CD4-positive, alpha-beta T cell (primary cell): ENCODE measurements at regions of chr9 and their contacts with region 1.

Region 1: DNA sequence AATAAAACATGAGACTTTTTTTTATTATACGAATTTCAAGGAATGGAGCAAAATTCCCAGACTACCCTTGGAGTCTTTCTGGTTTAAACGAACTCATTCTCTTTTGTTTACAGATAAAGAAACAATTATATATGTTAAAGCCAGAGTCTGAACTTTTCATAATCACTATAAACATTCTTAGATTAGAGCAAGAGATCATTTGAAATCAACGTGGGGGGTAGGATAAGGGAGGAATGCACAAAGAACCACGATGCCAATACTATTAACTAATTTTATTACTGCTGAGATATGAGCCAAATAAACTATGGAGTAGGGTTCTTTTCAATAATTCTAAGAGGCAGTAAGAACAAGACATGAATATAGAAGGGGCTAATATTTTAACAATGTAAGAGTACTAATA is 148.0 kb upstream of the FREM1 start:
- DNase-seq: no peak
- ATAC-seq: no peak
- H3K4me3 ChIP-seq: no peak overlapping the region
- H3K4me3 Mint-ChIP-seq: no peak overlapping the region
- H3K27ac ChIP-seq: no peak overlapping the region
- H3K27ac Mint-ChIP-seq: no peak overlapping the region
- H3K4me1 ChIP-seq: no peaks in the 10 kb centered on the region
- H3K4me1 Mint-ChIP-seq: no peaks in the 10 kb centered on the region
- H3K27me3 ChIP-seq: no peaks in the 10 kb centered on the region
- H3K27me3 Mint-ChIP-seq: peaks cover 14% of the 10 kb centered on the region
- CTCF ChIP-seq: no peak

Region 2: DNA sequence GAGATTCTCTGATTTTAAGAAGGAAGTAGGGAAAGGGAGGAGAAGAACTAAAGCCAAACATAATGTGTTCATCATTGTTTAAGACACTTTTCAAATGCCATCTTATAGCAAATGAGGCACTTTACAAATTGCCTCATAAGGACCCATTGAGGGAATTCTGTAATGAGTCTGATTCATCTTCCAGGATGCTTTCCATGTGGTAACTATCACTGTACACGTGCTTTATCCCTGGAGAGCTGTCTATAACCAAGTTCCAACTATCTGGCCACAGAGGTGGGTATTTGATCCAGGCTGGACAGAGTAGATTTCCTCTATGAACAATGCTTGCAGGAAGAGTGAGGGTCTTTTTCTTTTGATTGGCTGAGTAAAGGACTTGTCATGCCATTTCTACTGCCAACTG is 560.8 kb before region 1 on chr9:
- CTCF ChIA-PET with region 1: no interaction called
- POLR2A ChIA-PET with region 1: no interaction called
- intact Hi-C with region 1: no loop called
- DNase-seq: no peak
- ATAC-seq: no peak
- H3K4me3 ChIP-seq: no peak overlapping the region
- H3K4me3 Mint-ChIP-seq: no peak overlapping the region
- H3K27ac ChIP-seq: no peak overlapping the region
- H3K27ac Mint-ChIP-seq: no peak overlapping the region
- H3K4me1 ChIP-seq: no peaks in the 10 kb centered on the region
- H3K4me1 Mint-ChIP-seq: no peaks in the 10 kb centered on the region
- H3K27me3 ChIP-seq: no peaks in the 10 kb centered on the region
- H3K27me3 Mint-ChIP-seq: peaks cover 17% of the 10 kb centered on the region
- CTCF ChIP-seq: no peak

Region 3: GRCh38 chr9:15045666-15046065 is 12.6 kb before region 1 on chr9:
- CTCF ChIA-PET with region 1: no interaction called
- POLR2A ChIA-PET with region 1: no interaction called
- intact Hi-C with region 1: loop called in 1 of 2 experiments (anchors 1 kb)
- DNase-seq: no peak
- ATAC-seq: no peak
- H3K4me3 ChIP-seq: no peak overlapping the region
- H3K4me3 Mint-ChIP-seq: no peak overlapping the region
- H3K27ac ChIP-seq: no peak overlapping the region
- H3K27ac Mint-ChIP-seq: no peak overlapping the region
- H3K4me1 ChIP-seq: no peaks in the 10 kb centered on the region
- H3K4me1 Mint-ChIP-seq: no peaks in the 10 kb centered on the region
- H3K27me3 ChIP-seq: no peaks in the 10 kb centered on the region
- H3K27me3 Mint-ChIP-seq: peaks cover 4% of the 10 kb centered on the region
- CTCF ChIP-seq: no peak